ENCODE measurements at regions of chr1 and their contacts with region 1.

Region 1: DNA sequence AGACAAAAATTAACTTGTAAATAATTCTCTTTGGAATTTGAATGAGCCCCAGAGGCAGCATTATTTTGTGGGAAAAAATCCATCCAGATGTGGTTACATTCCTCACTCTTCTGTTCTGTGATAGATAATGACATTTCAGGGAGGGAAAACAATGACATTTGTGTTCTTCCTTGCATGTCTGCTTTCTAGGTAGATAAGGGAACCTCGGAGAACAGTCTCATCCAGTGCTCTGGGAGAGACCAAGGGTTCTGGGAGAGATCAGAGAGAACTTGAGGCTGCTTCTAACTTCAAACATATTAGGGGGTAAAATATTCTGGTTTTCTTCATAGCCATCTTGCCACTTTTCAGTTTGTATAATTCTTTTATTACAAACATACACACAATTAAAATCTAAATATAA is 269.2 kb downstream of the NEGR1 start:
- DNase-seq: no peak
- ATAC-seq: no peak
- H3K4me3 ChIP-seq: no peak overlapping the region
- H3K4me3 Mint-ChIP-seq: no peak overlapping the region
- H3K27ac ChIP-seq: no peak overlapping the region
- H3K27ac Mint-ChIP-seq: no peak overlapping the region
- H3K4me1 ChIP-seq: no peaks in the 10 kb centered on the region
- H3K4me1 Mint-ChIP-seq: no peaks in the 10 kb centered on the region
- H3K27me3 ChIP-seq: no peaks in the 10 kb centered on the region
- H3K27me3 Mint-ChIP-seq: no peaks in the 10 kb centered on the region
- CTCF ChIP-seq: no peak

Region 2: DNA sequence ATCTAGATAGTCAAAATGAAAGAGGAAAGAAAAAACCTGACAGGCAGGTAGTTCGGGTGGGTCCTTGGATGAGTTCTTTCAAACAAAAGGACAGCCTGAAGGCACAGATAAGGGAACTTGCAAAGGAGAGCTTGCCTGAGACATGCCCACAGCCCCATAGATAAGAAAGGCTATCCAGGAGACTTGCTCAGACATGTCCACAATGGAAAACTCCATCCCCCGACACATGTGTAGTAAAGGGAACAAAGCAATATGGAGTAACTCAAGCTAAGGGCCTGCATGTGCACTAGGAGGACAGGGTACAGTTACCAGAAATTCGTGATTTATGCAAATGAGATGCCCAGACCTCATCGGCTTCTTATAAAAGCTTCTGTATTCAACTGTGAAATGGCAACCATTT is 12.4 kb before region 1 on chr1:
- CTCF ChIA-PET with region 1: no interaction called
- POLR2A ChIA-PET with region 1: no interaction called
- intact Hi-C with region 1: loop called in 1 of 2 experiments (anchors 1 kb)
- DNase-seq: no peak
- ATAC-seq: no peak
- H3K4me3 ChIP-seq: no peak overlapping the region
- H3K4me3 Mint-ChIP-seq: no peak overlapping the region
- H3K27ac ChIP-seq: no peak overlapping the region
- H3K27ac Mint-ChIP-seq: no peak overlapping the region
- H3K4me1 ChIP-seq: no peaks in the 10 kb centered on the region
- H3K4me1 Mint-ChIP-seq: no peaks in the 10 kb centered on the region
- H3K27me3 ChIP-seq: no peaks in the 10 kb centered on the region
- H3K27me3 Mint-ChIP-seq: no peaks in the 10 kb centered on the region
- CTCF ChIP-seq: no peak

Measured in CD4-positive, alpha-beta T cell (primary cell).